WTC11 (cell line): ENCODE measurements at regions of chr5 and their contacts with region 1.

Region 1: DNA sequence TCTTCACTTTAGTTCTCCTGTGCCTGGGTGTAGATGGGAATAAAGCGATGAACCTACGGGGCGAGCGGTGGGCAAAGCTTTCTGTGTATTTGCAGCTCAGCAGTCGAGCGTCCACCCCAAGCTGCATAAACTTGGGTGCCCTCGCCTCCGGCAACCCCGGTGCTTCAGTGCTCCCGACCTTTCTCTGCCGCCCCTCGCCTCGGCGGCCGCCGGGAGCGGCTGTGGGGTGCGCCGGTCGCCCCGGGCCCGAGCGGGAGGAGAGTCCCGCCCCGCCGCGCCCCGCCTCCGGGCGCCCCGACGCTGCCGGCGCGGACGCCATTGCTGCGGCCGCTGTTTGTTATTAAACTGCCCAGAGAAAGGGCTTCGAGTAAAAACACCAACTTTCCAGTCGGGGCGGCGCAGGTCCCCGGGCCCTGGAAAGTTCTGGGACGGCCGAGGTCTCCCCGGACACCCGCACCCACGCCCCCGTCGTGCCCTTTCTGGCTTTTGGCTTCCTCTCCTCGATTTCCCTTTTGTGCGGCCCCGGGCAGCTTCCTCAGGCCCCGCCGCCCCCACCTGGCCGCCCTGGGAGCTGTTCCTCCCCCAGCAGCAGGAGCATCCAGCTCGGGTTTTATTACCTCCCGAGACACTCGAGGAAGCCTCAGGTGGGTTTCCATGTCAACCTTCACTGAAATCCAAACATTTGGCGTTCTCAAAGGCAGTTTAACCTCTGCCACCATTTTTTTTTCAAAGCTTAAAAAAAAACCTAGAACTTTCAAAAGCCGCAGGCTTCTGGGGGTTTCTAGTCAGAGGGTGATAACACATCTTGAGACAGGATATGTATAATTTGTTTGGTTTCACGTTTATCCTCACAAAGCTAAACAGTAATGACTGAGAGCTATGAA is 334.3 kb downstream of the CWC27 start:
- DNase-seq: peak; percentile 62
- ATAC-seq: peak; percentile 69
- H3K4me3 Mint-ChIP-seq: peak overlapping the region; percentile 77
- H3K27ac Mint-ChIP-seq: peak overlapping the region; percentile 97
- H3K4me1 Mint-ChIP-seq: peaks cover 33% of the 10 kb centered on the region
- H3K27me3 Mint-ChIP-seq: peaks cover 7% of the 10 kb centered on the region
- CTCF ChIP-seq: no peak

Region 2: GRCh38 chr5:65035211-65036206 is 67.6 kb before region 1 on chr5:
- CTCF ChIA-PET with region 1: interaction called, 3 read pairs
- POLR2A ChIA-PET with region 1: interaction called, 10 read pairs
- DNase-seq: peak; percentile 94
- ATAC-seq: peak; percentile 88
- H3K4me3 Mint-ChIP-seq: peak overlapping the region; percentile 70
- H3K27ac Mint-ChIP-seq: peak overlapping the region; percentile 96
- H3K4me1 Mint-ChIP-seq: peaks cover 37% of the 10 kb centered on the region
- H3K27me3 Mint-ChIP-seq: peaks cover 17% of the 10 kb centered on the region
- CTCF ChIP-seq: no peak